CD8-positive, alpha-beta memory T cell (primary cell): ENCODE measurements at regions of chr16 and their contacts with region 1.

Region 1: DNA sequence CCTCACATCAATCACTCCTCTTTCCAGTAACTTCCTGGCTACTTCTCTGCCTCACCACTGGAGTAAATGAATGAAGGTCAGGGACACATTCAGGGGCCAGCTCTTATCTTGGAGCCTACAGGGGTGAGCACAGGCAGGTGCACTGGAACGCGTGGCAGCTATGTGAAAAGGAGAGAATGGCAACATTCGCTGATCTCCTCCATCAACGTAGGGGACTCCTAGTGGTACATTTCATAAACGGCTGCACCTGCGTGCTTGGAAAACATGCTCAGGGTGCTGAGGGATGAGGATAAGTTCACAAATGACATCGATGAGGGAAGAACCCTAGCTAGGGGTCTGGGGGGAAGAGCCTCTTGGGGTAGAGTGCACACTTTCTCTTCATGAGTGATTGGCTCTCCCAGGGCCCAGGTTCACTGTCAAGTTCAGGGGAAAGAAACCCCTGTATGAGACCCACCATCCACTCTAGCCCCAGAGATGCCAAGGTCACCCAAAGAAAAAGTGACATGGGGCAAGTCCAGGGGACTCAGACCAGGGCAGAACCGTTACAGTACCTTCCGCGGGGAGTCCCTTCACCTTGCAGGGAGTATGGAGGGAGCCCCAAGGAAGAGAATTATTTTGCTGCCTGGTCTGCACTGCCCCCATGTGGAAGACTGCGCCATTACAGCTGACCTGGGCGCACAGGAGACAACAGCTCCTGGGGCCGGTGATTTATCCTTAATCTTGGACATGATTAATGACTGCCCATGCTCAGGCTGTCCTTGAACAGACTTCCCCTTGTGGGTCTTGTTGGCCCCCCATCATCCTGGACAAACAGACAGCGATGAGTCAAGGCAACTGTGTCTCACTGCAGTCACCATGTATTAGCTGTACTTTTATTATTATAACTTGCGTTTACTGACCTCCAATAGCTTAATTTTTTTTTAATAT is 30.1 kb downstream of the VAC14 start:
- DNase-seq: peak; percentile 24 to 67 (median 30)
- H3K4me3 ChIP-seq: no peak overlapping the region
- H3K4me3 Mint-ChIP-seq: no peak overlapping the region
- H3K27ac ChIP-seq: no peak overlapping the region
- H3K27ac Mint-ChIP-seq: peak overlapping the region in 1 of 8 donors; percentile 56
- H3K4me1 ChIP-seq: no peaks in the 10 kb centered on the region
- H3K4me1 Mint-ChIP-seq: no peaks in the 10 kb centered on the region
- H3K27me3 ChIP-seq: no peaks in the 10 kb centered on the region
- H3K27me3 Mint-ChIP-seq: no peaks in the 10 kb centered on the region

Region 2: GRCh38 chr16:70610273-70611223 is 160.3 kb before region 1 on chr16:
- CTCF ChIA-PET with region 1: no interaction called
- POLR2A ChIA-PET with region 1: no interaction called
- DNase-seq: no peak
- H3K4me3 ChIP-seq: no peak overlapping the region
- H3K4me3 Mint-ChIP-seq: no peak overlapping the region
- H3K27ac ChIP-seq: no peak overlapping the region
- H3K27ac Mint-ChIP-seq: peak overlapping the region in 1 of 8 donors; percentile 22
- H3K4me1 ChIP-seq: no peaks in the 10 kb centered on the region
- H3K4me1 Mint-ChIP-seq: no peaks in the 10 kb centered on the region
- H3K27me3 ChIP-seq: no peaks in the 10 kb centered on the region
- H3K27me3 Mint-ChIP-seq: peaks cover 0 to 5% of the 10 kb centered on the region in 2 donors

Region 3: GRCh38 chr16:70653809-70654771 is 116.8 kb before region 1 on chr16:
- CTCF ChIA-PET with region 1: interaction called, 19 read pairs
- POLR2A ChIA-PET with region 1: no interaction called
- DNase-seq: peak; percentile 54 to 78 (median 65)
- H3K4me3 ChIP-seq: peak overlapping the region; percentile 14
- H3K4me3 Mint-ChIP-seq: peak overlapping the region in 6 of 7 donors; percentile 9 to 67 (median 50)
- H3K27ac ChIP-seq: no peak overlapping the region
- H3K27ac Mint-ChIP-seq: peak overlapping the region in 5 of 8 donors; percentile 6 to 95 (median 39)
- H3K4me1 ChIP-seq: peaks cover 5% of the 10 kb centered on the region
- H3K4me1 Mint-ChIP-seq: peaks cover 4 to 5% (median 5%) of the 10 kb centered on the region in 3 donors
- H3K27me3 ChIP-seq: no peaks in the 10 kb centered on the region
- H3K27me3 Mint-ChIP-seq: peaks cover 0 to 3% of the 10 kb centered on the region in 2 donors

Region 4: DNA sequence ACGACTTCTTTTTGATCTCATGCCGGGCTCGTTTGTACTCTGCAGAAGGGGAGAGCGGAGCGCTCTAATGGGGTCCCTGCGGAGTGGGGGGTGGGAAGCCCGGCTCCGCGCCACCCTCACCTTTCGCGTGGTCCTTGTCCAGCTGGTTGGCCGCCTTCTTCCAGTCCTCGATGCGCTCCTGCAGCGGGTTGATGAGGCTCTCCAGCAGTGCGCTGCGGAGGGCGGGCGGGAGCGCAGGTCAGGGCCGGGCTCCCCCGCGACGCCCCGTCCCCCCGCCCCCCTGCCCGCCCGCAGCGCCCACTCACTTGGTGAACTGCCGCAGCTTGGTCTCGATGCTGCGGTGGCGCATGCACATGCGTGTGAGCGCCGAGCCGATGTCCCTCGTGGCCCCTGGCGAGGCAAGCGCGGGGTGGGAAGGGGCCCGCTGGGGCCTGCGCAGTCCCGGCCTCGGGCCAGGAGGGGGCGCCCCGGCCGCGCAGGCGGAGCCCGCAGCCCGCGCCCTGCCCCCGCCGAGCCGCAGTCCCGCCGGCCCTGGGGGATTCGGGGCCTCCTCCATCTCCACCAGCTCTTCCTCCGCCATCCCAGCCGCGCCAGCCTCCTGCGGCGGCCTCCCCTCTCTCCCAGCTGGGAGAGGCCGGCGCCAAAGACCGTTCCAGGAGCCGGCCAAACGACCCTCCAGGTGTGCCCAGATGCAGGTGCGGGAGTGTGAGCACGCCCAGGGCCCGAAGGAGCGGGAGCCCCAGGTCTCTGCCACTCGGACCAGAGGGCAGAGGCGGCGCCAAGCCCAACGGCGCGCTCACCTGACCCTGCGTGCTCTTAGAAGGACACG is 91.0 kb before region 1 on chr16:
- CTCF ChIA-PET with region 1: interaction called, 29 read pairs
- POLR2A ChIA-PET with region 1: no interaction called
- DNase-seq: peak in 2 of 5 donors; percentile 33 to 39
- H3K4me3 ChIP-seq: no peak overlapping the region
- H3K4me3 Mint-ChIP-seq: no peak overlapping the region
- H3K27ac ChIP-seq: no peak overlapping the region
- H3K27ac Mint-ChIP-seq: no peak overlapping the region
- H3K4me1 ChIP-seq: no peaks in the 10 kb centered on the region
- H3K4me1 Mint-ChIP-seq: peaks cover 9 to 18% (median 11%) of the 10 kb centered on the region in 3 donors
- H3K27me3 ChIP-seq: peaks cover 5% of the 10 kb centered on the region
- H3K27me3 Mint-ChIP-seq: peaks cover 5 to 12% of the 10 kb centered on the region in 2 donors

Region 5: GRCh38 chr16:70688246-70689000 is 82.5 kb before region 1 on chr16:
- CTCF ChIA-PET with region 1: interaction called, 15 read pairs
- POLR2A ChIA-PET with region 1: interaction called, 3 read pairs
- DNase-seq: no peak
- H3K4me3 ChIP-seq: no peak overlapping the region
- H3K4me3 Mint-ChIP-seq: no peak overlapping the region
- H3K27ac ChIP-seq: no peak overlapping the region
- H3K27ac Mint-ChIP-seq: no peak overlapping the region
- H3K4me1 ChIP-seq: no peaks in the 10 kb centered on the region
- H3K4me1 Mint-ChIP-seq: peaks cover 3 to 10% (median 6%) of the 10 kb centered on the region in 3 donors
- H3K27me3 ChIP-seq: peaks cover 7% of the 10 kb centered on the region
- H3K27me3 Mint-ChIP-seq: peaks cover 6% of the 10 kb centered on the region in 2 donors

Region 6: DNA sequence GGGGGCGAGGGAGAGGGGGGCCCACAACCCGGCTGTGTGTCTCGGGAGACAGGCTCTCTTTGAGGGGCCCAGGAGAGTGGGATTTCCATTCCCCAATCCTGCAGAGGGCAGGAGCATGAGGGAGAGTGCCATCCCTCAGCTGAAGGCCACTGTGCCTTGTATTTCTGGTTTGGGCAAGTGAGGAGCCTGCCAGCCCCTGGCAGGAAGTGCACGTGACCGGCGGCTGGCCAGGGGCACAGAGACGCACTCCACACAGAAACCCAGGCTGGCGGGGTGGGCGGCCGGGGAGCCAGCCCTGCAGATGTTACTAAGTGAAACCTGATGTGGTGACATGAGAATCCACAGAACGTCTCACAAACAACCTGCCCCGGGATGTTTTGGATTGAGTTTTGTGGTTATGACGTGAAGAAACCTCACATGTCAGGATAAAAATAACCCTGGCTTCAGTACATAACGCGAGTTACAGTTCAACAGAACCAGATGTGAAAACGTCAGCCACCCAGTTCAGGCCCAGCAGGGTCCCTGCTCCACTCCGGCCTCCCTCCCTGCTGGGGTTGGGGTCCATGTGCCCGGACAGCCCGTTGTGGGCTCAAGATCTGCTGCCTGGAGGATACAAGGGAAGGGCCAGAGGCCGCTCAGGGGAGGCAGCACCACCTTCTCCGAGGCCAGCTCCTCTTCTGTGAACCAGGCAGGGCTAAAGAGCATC is 33.4 kb before region 1 on chr16:
- CTCF ChIA-PET with region 1: interaction called, 13 read pairs
- POLR2A ChIA-PET with region 1: no interaction called
- DNase-seq: peak; percentile 46 to 92 (median 82)
- H3K4me3 ChIP-seq: no peak overlapping the region
- H3K4me3 Mint-ChIP-seq: peak overlapping the region; percentile 28 to 88 (median 75)
- H3K27ac ChIP-seq: peak overlapping the region; percentile 65
- H3K27ac Mint-ChIP-seq: peak overlapping the region; percentile 83 to 99 (median 97)
- H3K4me1 ChIP-seq: peaks cover 27% of the 10 kb centered on the region
- H3K4me1 Mint-ChIP-seq: peaks cover 32 to 51% (median 32%) of the 10 kb centered on the region in 3 donors
- H3K27me3 ChIP-seq: no peaks in the 10 kb centered on the region
- H3K27me3 Mint-ChIP-seq: no peaks in the 10 kb centered on the region

Region 7: DNA sequence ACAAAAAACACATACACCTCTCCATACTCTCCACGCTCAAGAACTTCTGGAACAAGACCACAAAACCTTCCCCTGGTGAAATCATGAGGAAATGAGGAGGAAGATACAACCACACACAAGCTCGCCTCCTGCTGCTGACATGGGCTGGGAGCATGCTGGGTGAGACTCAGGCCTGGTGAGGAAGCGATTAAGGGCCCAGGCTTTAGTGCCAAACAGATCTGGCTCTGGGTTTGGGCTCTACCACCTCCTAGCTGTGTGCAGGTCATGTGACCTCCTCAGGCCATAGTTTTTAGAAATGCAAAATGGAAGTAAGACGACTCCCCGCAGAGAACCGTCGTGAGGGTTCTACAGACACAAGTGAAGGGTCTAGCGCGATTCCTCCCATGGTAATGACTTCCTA is 11.2 kb before region 1 on chr16:
- CTCF ChIA-PET with region 1: interaction called, 17 read pairs
- POLR2A ChIA-PET with region 1: no interaction called
- DNase-seq: no peak
- H3K4me3 ChIP-seq: no peak overlapping the region
- H3K4me3 Mint-ChIP-seq: no peak overlapping the region
- H3K27ac ChIP-seq: no peak overlapping the region
- H3K27ac Mint-ChIP-seq: peak overlapping the region in 2 of 8 donors; percentile 22 to 24
- H3K4me1 ChIP-seq: no peaks in the 10 kb centered on the region
- H3K4me1 Mint-ChIP-seq: no peaks in the 10 kb centered on the region
- H3K27me3 ChIP-seq: no peaks in the 10 kb centered on the region
- H3K27me3 Mint-ChIP-seq: peaks cover 0 to 1% of the 10 kb centered on the region in 2 donors